Ovary (tissue), 10 donors: ENCODE measurements at regions of chr18 and their contacts with region 1.

Region 1: DNA sequence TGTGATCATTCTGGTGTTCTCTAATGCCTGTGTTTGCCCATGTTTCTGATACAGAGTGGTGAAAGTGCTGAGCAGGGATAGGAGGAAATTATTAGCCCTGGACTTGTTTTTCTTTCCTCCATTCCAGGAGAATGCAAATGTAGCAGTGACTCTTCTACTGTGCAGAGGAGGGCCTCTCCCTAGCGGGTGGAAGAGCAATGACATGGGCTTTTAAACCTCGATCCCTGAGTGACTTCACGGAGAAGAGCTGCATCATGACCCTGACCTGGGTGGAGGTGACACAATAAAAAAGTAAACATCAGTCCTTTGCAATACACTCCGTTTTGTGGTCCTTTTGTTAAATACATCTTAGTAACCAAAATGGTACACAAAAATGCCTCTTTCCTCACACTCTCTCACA is 68.0 kb upstream of the NETO1 start:
- DNase-seq: no peak
- H3K4me3 ChIP-seq: no peak overlapping the region
- H3K27ac ChIP-seq: no peak overlapping the region
- H3K4me1 ChIP-seq: no peaks in the 10 kb centered on the region
- H3K27me3 ChIP-seq: peaks cover 3% of the 10 kb centered on the region
- CTCF ChIP-seq: no peak
- EP300 ChIP-seq: no peak
- POLR2A ChIP-seq: no peak

Region 2: DNA sequence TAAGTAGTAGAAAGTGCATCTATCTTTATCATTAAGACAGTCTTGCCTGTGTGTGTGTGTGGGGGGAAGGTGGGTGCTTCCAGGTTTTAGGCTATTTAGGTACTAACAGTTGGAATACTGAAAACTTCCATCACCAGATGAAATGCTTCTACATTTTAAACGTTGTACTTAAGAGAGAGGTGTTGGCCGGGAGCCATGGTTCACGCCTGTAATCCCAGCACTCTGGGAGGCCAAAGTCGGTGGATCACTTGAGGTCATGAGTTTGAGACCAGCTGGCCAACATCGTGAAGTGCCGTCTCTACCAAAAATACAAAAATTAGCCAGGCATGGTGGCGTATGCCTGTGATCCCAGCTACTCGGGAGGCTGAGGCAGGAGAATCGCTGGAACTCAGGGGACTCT is 72.0 kb before region 1 on chr18:
- intact Hi-C with region 1: no loop called
- DNase-seq: no peak
- H3K4me3 ChIP-seq: no peak overlapping the region
- H3K27ac ChIP-seq: no peak overlapping the region
- H3K4me1 ChIP-seq: peaks cover 3% of the 10 kb centered on the region
- H3K27me3 ChIP-seq: no peaks in the 10 kb centered on the region
- CTCF ChIP-seq: no peak
- EP300 ChIP-seq: no peak
- POLR2A ChIP-seq: no peak

Region 3: GRCh38 chr18:72878143-72878542 is 57.6 kb before region 1 on chr18:
- intact Hi-C with region 1: no loop called
- DNase-seq: no peak
- H3K4me3 ChIP-seq: no peak overlapping the region
- H3K27ac ChIP-seq: no peak overlapping the region
- H3K4me1 ChIP-seq: no peaks in the 10 kb centered on the region
- H3K27me3 ChIP-seq: no peaks in the 10 kb centered on the region
- CTCF ChIP-seq: no peak
- EP300 ChIP-seq: no peak
- POLR2A ChIP-seq: no peak

Region 4: DNA sequence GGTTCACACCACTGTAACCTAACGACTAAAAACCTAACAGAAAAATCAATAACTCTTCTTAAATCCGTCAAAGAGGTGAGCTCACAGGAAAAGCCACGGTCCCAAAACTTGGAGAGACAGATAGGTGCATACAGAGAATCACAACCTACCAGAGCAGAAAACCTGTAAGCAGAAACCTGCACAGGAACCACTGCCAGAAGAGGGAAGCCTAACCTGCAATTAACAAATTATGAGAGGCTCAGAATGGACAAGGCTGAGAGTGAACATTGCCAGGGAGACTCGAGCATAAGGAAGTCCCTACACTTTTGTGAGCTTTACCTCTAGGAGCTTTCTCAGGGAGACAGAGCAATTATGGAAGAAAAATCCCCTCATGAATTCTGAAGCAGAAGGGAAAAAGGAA is 88.2 kb after region 1 on chr18:
- intact Hi-C with region 1: loop called in 1 of 4 experiments (anchors 5 kb)
- DNase-seq: no peak
- H3K4me3 ChIP-seq: no peak overlapping the region
- H3K27ac ChIP-seq: no peak overlapping the region
- H3K4me1 ChIP-seq: no peaks in the 10 kb centered on the region
- H3K27me3 ChIP-seq: no peaks in the 10 kb centered on the region
- CTCF ChIP-seq: no peak
- EP300 ChIP-seq: no peak
- POLR2A ChIP-seq: no peak